T-cell (primary cell): ENCODE measurements at regions of chr19 and their contacts with region 1.

Region 1: GRCh38 chr19:19821366-19821951 is at the start of gene ZNF506:
- DNase-seq: peak; percentile 90 to 99 (median 97)
- ATAC-seq: peak; percentile 83 to 93 (median 92)
- H3K4me3 ChIP-seq: peak within 1 kb of the TSS; percentile 81 to 89
- H3K4me3 Mint-ChIP-seq: peak within 1 kb of the TSS; percentile 99
- H3K27ac ChIP-seq: peak within 1 kb of the TSS; percentile 90
- H3K27ac Mint-ChIP-seq: peak within 1 kb of the TSS; percentile 99
- H3K4me1 ChIP-seq: peaks cover 0 to 42% of the 10 kb centered on the region in 2 experiments
- H3K4me1 Mint-ChIP-seq: peaks cover 40 to 46% (median 43%) of the 10 kb centered on the region in 3 donors
- H3K27me3 ChIP-seq: no peaks in the 10 kb centered on the region
- H3K27me3 Mint-ChIP-seq: no peaks in the 10 kb centered on the region
- total RNA-seq, gene ZNF506: 35.3 to 65.6 (median 58.1) TPM

Region 2: GRCh38 chr19:19329126-19329525 is 492.3 kb before region 1 on chr19:
- CTCF ChIA-PET with region 1: no interaction called
- POLR2A ChIA-PET with region 1: no interaction called
- DNase-seq: no peak
- ATAC-seq: no peak
- H3K4me3 ChIP-seq: no peak overlapping the region
- H3K4me3 Mint-ChIP-seq: no peak overlapping the region
- H3K27ac ChIP-seq: no peak overlapping the region
- H3K27ac Mint-ChIP-seq: peak overlapping the region; percentile 52 to 79
- H3K4me1 ChIP-seq: peaks cover 4 to 22% of the 10 kb centered on the region in 2 experiments
- H3K4me1 Mint-ChIP-seq: peaks cover 33 to 38% (median 37%) of the 10 kb centered on the region in 3 donors
- H3K27me3 ChIP-seq: no peaks in the 10 kb centered on the region
- H3K27me3 Mint-ChIP-seq: no peaks in the 10 kb centered on the region

Region 3: GRCh38 chr19:19732579-19733501 is 88.6 kb before region 1 on chr19 and contains the start of gene ZNF14:
- CTCF ChIA-PET with region 1: interaction called in 1 of 2 experiments, 5 read pairs
- POLR2A ChIA-PET with region 1: interaction called in 1 of 2 experiments, 14 read pairs
- DNase-seq: peak; percentile 79 to 94 (median 88)
- ATAC-seq: peak; percentile 99 to 100 (median 100)
- H3K4me3 ChIP-seq: peak within 1 kb of the TSS; percentile 88 to 93
- H3K4me3 Mint-ChIP-seq: peak within 1 kb of the TSS; percentile 93 to 99 (median 94)
- H3K27ac ChIP-seq: peak within 1 kb of the TSS; percentile 78
- H3K27ac Mint-ChIP-seq: peak within 1 kb of the TSS; percentile 95 to 97
- H3K4me1 ChIP-seq: peaks cover 5 to 23% of the 10 kb centered on the region in 2 experiments
- H3K4me1 Mint-ChIP-seq: peaks cover 27 to 34% (median 27%) of the 10 kb centered on the region in 3 donors
- H3K27me3 ChIP-seq: no peaks in the 10 kb centered on the region
- H3K27me3 Mint-ChIP-seq: no peaks in the 10 kb centered on the region
- total RNA-seq, gene ZNF14: 19.4 to 27.7 (median 21.7) TPM

Region 4: DNA sequence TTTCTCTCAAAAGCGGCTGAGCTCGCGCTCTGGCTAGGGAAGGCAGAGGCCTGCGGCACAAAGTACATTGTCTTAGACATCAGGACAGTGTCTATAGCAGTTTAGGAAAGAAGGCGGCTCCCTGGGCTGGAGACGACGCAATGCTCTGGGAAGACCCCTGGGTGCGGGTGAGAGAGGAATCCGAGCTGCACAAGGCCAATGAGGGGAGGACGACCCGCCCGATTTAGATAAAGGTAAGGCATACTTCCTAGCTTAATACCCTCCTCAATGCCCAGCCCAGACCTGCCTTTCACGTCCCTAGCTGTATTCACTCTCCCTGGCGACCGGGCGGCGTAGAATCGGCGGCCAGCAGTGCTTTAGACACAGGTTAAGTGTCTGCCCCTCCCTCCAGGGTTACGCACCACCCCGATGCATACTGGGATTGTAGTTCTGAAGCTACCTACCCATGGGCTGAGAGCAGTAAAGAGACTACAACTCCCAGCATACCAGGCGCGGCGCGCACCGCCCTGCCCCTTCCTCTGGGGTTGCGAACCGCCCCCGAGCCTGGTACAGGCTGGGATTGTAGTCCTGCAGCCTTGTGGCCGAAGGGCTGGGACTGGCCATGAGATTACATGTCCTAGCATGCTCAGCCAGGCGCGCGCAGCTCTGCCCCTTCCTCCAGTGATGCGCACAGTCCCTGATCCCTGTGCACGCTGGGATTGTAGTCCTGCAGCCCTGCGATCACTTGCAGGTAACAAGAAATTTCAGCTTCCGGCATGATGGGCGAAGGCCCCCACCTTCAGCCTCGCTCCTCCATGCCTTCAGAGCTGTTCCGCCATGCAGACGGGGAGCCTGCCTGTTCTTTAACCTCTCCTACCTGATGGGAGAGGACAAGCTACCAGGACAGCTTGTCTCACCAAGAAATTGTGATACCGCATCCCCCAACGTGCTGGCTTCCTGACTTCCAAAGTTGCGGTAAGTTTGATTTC is 45.1 kb before region 1 on chr19:
- CTCF ChIA-PET with region 1: interaction called in 1 of 2 experiments, 11 read pairs
- POLR2A ChIA-PET with region 1: interaction called, 3 to 26 read pairs
- DNase-seq: peak; percentile 80 to 94 (median 90)
- ATAC-seq: peak; percentile 99 to 100 (median 99)
- H3K4me3 ChIP-seq: peak overlapping the region; percentile 87 to 88
- H3K4me3 Mint-ChIP-seq: peak overlapping the region; percentile 86 to 98 (median 92)
- H3K27ac ChIP-seq: peak overlapping the region; percentile 48
- H3K27ac Mint-ChIP-seq: peak overlapping the region; percentile 85 to 89
- H3K4me1 ChIP-seq: peaks cover 17 to 20% of the 10 kb centered on the region in 2 experiments
- H3K4me1 Mint-ChIP-seq: peaks cover 49 to 63% (median 62%) of the 10 kb centered on the region in 3 donors
- H3K27me3 ChIP-seq: no peaks in the 10 kb centered on the region
- H3K27me3 Mint-ChIP-seq: no peaks in the 10 kb centered on the region

Region 5: DNA sequence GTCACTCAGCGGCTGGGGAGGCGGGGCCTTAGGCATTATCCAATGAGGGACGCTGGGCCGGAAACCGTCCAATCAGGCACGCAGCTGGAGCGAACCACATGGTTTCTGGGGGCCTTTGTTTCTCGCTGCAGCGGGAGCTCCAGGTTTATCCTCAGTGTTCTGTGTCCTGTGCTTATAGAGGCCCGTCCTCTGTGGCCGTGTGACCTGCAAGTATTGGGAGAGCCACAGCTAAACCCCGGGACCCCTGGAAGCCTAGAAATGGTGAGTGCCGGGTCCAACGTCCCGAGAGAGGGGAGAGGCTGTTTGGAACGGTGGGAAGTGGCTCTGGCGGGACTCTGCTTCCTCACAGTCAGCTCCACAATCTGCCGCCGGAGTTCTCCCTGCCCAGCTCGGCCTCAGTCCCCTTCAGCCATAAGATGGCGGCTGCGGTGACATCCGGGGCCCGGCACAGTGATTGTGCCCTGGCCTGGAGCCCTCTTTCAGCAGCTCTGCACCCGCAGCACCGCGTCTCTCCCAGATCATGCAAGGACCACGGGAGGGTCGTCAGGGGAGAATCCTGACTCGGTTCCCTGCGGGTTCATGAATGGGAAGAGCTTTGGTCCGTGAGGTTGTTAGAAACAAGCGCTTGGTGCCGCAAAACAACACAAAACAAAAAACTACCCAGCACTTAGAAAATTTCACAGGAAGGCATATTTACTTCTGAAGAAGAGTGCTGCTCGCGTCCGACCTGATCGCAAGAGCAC is 44.5 kb after region 1 on chr19 and contains the start of gene ZNF253:
- CTCF ChIA-PET with region 1: interaction called, 3 to 5 read pairs
- POLR2A ChIA-PET with region 1: interaction called, 10 to 27 read pairs
- DNase-seq: peak; percentile 89 to 97 (median 95)
- ATAC-seq: peak; percentile 93 to 97 (median 95)
- H3K4me3 ChIP-seq: peak within 1 kb of the TSS; percentile 95 to 99
- H3K4me3 Mint-ChIP-seq: peak within 1 kb of the TSS; percentile 99 to 100 (median 100)
- H3K27ac ChIP-seq: peak within 1 kb of the TSS; percentile 84
- H3K27ac Mint-ChIP-seq: peak within 1 kb of the TSS; percentile 97 to 99
- H3K4me1 ChIP-seq: peaks cover 9 to 18% of the 10 kb centered on the region in 2 experiments
- H3K4me1 Mint-ChIP-seq: peaks cover 30 to 43% (median 38%) of the 10 kb centered on the region in 3 donors
- H3K27me3 ChIP-seq: no peaks in the 10 kb centered on the region
- H3K27me3 Mint-ChIP-seq: no peaks in the 10 kb centered on the region
- total RNA-seq, gene ZNF253: 8.4 to 27.9 (median 21.8) TPM

Region 6: GRCh38 chr19:19966862-19967261 is 145.4 kb after region 1 on chr19:
- CTCF ChIA-PET with region 1: no interaction called
- POLR2A ChIA-PET with region 1: no interaction called
- DNase-seq: no peak
- ATAC-seq: no peak
- H3K4me3 ChIP-seq: no peak overlapping the region
- H3K4me3 Mint-ChIP-seq: no peak overlapping the region
- H3K27ac ChIP-seq: no peak overlapping the region
- H3K27ac Mint-ChIP-seq: no peak overlapping the region
- H3K4me1 ChIP-seq: no peaks in the 10 kb centered on the region
- H3K4me1 Mint-ChIP-seq: no peaks in the 10 kb centered on the region
- H3K27me3 ChIP-seq: peaks cover 0 to 6% of the 10 kb centered on the region in 2 experiments
- H3K27me3 Mint-ChIP-seq: peaks cover 0 to 5% of the 10 kb centered on the region in 2 donors